Breast epithelium (tissue), 4 donors: ENCODE measurements at regions of chr17 and their contacts with region 1.

Region 1: GRCh38 chr17:41695954-41696756 is 7.5 kb downstream of the EIF1 start:
- DNase-seq: no peak
- H3K4me3 ChIP-seq: no peak overlapping the region
- H3K27ac ChIP-seq: peak overlapping the region; percentile 57 to 72
- H3K4me1 ChIP-seq: peaks cover 0 to 5% of the 10 kb centered on the region in 2 donors
- H3K27me3 ChIP-seq: no peaks in the 10 kb centered on the region
- CTCF ChIP-seq: peak; percentile 66 to 73 (median 68)
- POLR2A ChIP-seq: no peak

Region 2: GRCh38 chr17:41717408-41718286 is 21.5 kb after region 1 on chr17:
- intact Hi-C with region 1: loop called (anchors 1 kb)
- DNase-seq: peak in 1 of 2 donors; percentile 73
- H3K4me3 ChIP-seq: peak overlapping the region in 1 of 3 donors; percentile 2
- H3K27ac ChIP-seq: peak overlapping the region; percentile 72 to 90
- H3K4me1 ChIP-seq: no peaks in the 10 kb centered on the region
- H3K27me3 ChIP-seq: no peaks in the 10 kb centered on the region
- CTCF ChIP-seq: no peak
- POLR2A ChIP-seq: no peak